Heart right ventricle (tissue), 16 donors: ENCODE measurements at regions of chr20 and their contacts with region 1.

Region 1: GRCh38 chr20:53738039-53738944 is 144.7 kb upstream of the ZNF217 start:
- DNase-seq: peak; percentile 53 to 59
- ATAC-seq: peak; percentile 74 to 92 (median 87)
- H3K4me3 ChIP-seq: peak overlapping the region in 6 of 10 donors; percentile 3 to 43 (median 24)
- H3K27ac ChIP-seq: peak overlapping the region; percentile 53 to 86 (median 79)
- H3K4me1 ChIP-seq: peaks cover 6 to 69% (median 47%) of the 10 kb centered on the region in 9 donors
- H3K27me3 ChIP-seq: no peaks in the 10 kb centered on the region
- CTCF ChIP-seq: no peak

Region 2: GRCh38 chr20:53623454-53624211 is 114.7 kb before region 1 on chr20:
- intact Hi-C with region 1: loop called in 1 of 10 experiments (anchors 5 kb)
- DNase-seq: peak; percentile 40 to 73
- ATAC-seq: peak; percentile 88 to 94 (median 92)
- H3K4me3 ChIP-seq: peak overlapping the region in 9 of 10 donors; percentile 14 to 54 (median 47)
- H3K27ac ChIP-seq: peak overlapping the region; percentile 32 to 97 (median 85)
- H3K4me1 ChIP-seq: peaks cover 0 to 54% (median 36%) of the 10 kb centered on the region in 9 donors
- H3K27me3 ChIP-seq: no peaks in the 10 kb centered on the region
- CTCF ChIP-seq: peak in 2 of 9 donors; percentile 16 to 39

Region 3: GRCh38 chr20:53677447-53678314 is 60.6 kb before region 1 on chr20:
- intact Hi-C with region 1: no loop called
- DNase-seq: peak in 1 of 2 donors; percentile 38
- ATAC-seq: peak in 7 of 8 donors; percentile 34 to 73 (median 70)
- H3K4me3 ChIP-seq: no peak overlapping the region
- H3K27ac ChIP-seq: peak overlapping the region in 9 of 10 donors; percentile 2 to 76 (median 63)
- H3K4me1 ChIP-seq: peaks cover 0 to 39% (median 25%) of the 10 kb centered on the region in 9 donors
- H3K27me3 ChIP-seq: no peaks in the 10 kb centered on the region
- CTCF ChIP-seq: no peak

Region 4: GRCh38 chr20:53763707-53764414 is 25.6 kb after region 1 on chr20:
- intact Hi-C with region 1: no loop called
- DNase-seq: no peak
- ATAC-seq: no peak
- H3K4me3 ChIP-seq: peak overlapping the region in 4 of 10 donors; percentile 11 to 29 (median 24)
- H3K27ac ChIP-seq: no peak overlapping the region
- H3K4me1 ChIP-seq: peaks cover 0 to 6% (median 0%) of the 10 kb centered on the region in 9 donors
- H3K27me3 ChIP-seq: no peaks in the 10 kb centered on the region
- CTCF ChIP-seq: no peak

Region 5: GRCh38 chr20:53828682-53829254 is 90.5 kb after region 1 on chr20:
- intact Hi-C with region 1: loop called in 1 of 10 experiments (anchors 5 kb)
- DNase-seq: peak in 1 of 2 donors; percentile 63
- ATAC-seq: peak; percentile 72 to 93 (median 85)
- H3K4me3 ChIP-seq: peak overlapping the region in 7 of 10 donors; percentile 5 to 43 (median 35)
- H3K27ac ChIP-seq: peak overlapping the region; percentile 28 to 93 (median 84)
- H3K4me1 ChIP-seq: peaks cover 0 to 48% (median 20%) of the 10 kb centered on the region in 9 donors
- H3K27me3 ChIP-seq: no peaks in the 10 kb centered on the region
- CTCF ChIP-seq: peak in 3 of 9 donors; percentile 12 to 40 (median 24)

Region 6: GRCh38 chr20:53915446-53916172 is 177.3 kb after region 1 on chr20:
- intact Hi-C with region 1: loop called in 1 of 10 experiments (anchors 10 kb)
- DNase-seq: peak; percentile 96 to 98
- ATAC-seq: peak; percentile 87 to 96 (median 92)
- H3K4me3 ChIP-seq: peak overlapping the region; percentile 50 to 76 (median 64)
- H3K27ac ChIP-seq: peak overlapping the region; percentile 65 to 97 (median 89)
- H3K4me1 ChIP-seq: peaks cover 5 to 47% (median 33%) of the 10 kb centered on the region in 9 donors
- H3K27me3 ChIP-seq: no peaks in the 10 kb centered on the region
- CTCF ChIP-seq: peak; percentile 84 to 93 (median 92)